Caco-2 (cell line): ENCODE measurements at regions of chr11 and their contacts with region 1.

Region 1: GRCh38 chr11:9878936-9879335 is 215.1 kb downstream of the SWAP70 start:
- DNase-seq: no peak
- H3K4me3 ChIP-seq: no peak overlapping the region
- H3K4me3 Mint-ChIP-seq: peak overlapping the region; percentile 5
- H3K27ac Mint-ChIP-seq: peak overlapping the region; percentile 28
- H3K4me1 ChIP-seq: peaks cover 43% of the 10 kb centered on the region
- H3K4me1 Mint-ChIP-seq: peaks cover 32% of the 10 kb centered on the region
- H3K27me3 ChIP-seq: no peaks in the 10 kb centered on the region
- H3K27me3 Mint-ChIP-seq: no peaks in the 10 kb centered on the region
- CTCF ChIP-seq: no peak

Region 2: GRCh38 chr11:9840460-9841004 is 38.4 kb before region 1 on chr11:
- CTCF ChIA-PET with region 1: no interaction called
- POLR2A ChIA-PET with region 1: no interaction called
- intact Hi-C with region 1: no loop called
- DNase-seq: no peak
- H3K4me3 ChIP-seq: no peak overlapping the region
- H3K4me3 Mint-ChIP-seq: no peak overlapping the region
- H3K27ac Mint-ChIP-seq: no peak overlapping the region
- H3K4me1 ChIP-seq: peaks cover 12% of the 10 kb centered on the region; the same call in 1 of the 2 replicates
- H3K4me1 Mint-ChIP-seq: peaks cover 16% of the 10 kb centered on the region
- H3K27me3 ChIP-seq: no peaks in the 10 kb centered on the region
- H3K27me3 Mint-ChIP-seq: no peaks in the 10 kb centered on the region
- CTCF ChIP-seq: no peak

Region 3: GRCh38 chr11:9861860-9862725 is 16.8 kb before region 1 on chr11:
- CTCF ChIA-PET with region 1: no interaction called
- POLR2A ChIA-PET with region 1: no interaction called
- intact Hi-C with region 1: loop called (anchors 2 kb)
- DNase-seq: peak; percentile 77 to 82
- H3K4me3 ChIP-seq: no peak overlapping the region
- H3K4me3 Mint-ChIP-seq: no peak overlapping the region
- H3K27ac Mint-ChIP-seq: no peak overlapping the region
- H3K4me1 ChIP-seq: peaks cover 60% of the 10 kb centered on the region
- H3K4me1 Mint-ChIP-seq: peaks cover 41% of the 10 kb centered on the region
- H3K27me3 ChIP-seq: no peaks in the 10 kb centered on the region
- H3K27me3 Mint-ChIP-seq: no peaks in the 10 kb centered on the region
- CTCF ChIP-seq: peak; percentile 77 to 87